PC-3 (cell line): ENCODE measurements at regions of chr3 and their contacts with region 1.

Region 1: DNA sequence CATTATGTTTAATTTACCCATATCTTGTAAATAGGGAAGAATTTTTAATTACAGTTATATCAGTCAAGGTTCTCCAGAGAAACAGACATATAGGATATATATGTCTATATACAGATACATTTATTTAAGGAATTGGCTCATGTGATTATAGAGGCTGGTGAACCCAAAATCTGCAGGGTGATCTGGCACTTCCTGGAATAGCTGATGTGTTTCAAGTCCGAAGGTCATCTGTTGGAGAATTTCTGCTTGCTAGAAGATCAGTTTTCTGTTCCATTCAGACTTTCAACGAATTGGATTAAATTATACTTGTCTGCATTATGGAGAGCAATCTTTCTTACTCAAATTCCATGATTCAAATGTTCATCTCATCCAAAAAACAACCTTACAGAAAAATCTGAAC is 694.6 kb upstream of the DPPA4 start:
- DNase-seq: no peak
- ATAC-seq: no peak
- H3K4me3 ChIP-seq: no peak overlapping the region
- H3K27ac ChIP-seq: no peak overlapping the region
- H3K4me1 ChIP-seq: 0 out of 2 replicates have a peak, but pooled peaks cover 3% of the 10 kb centered on the region
- H3K27me3 ChIP-seq: no peaks in the 10 kb centered on the region
- CTCF ChIP-seq: no peak

Region 2: GRCh38 chr3:109743981-109744380 is 288.0 kb before region 1 on chr3:
- CTCF ChIA-PET with region 1: no interaction called
- POLR2A ChIA-PET with region 1: interaction called, 10 read pairs
- intact Hi-C with region 1: no loop called
- DNase-seq: no peak
- ATAC-seq: no peak
- H3K4me3 ChIP-seq: no peak overlapping the region
- H3K27ac ChIP-seq: no peak overlapping the region
- H3K4me1 ChIP-seq: no peaks in the 10 kb centered on the region
- H3K27me3 ChIP-seq: no peaks in the 10 kb centered on the region
- CTCF ChIP-seq: no peak

Region 3: DNA sequence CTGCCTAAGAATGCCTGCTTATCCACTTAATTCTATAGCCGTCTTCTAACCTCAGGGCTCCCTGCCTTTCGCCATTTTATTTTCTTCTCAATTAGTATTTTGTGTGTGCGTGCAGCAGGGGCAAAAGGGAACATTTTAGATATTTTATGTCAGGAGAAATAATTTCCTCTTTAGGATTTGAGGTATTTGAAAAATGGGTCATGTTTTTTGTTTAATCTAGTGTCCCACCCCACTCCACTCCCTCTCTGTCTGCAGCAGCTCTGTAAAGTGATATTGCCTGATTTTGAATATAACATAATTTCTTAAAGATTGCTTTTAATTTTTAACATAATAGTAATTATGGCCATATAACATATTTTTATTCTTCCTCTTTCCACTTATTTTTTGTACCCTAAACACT is 101.4 kb before region 1 on chr3:
- CTCF ChIA-PET with region 1: no interaction called
- POLR2A ChIA-PET with region 1: no interaction called
- intact Hi-C with region 1: no loop called
- DNase-seq: peak; percentile 31
- ATAC-seq: peak; percentile 31
- H3K4me3 ChIP-seq: no peak overlapping the region
- H3K27ac ChIP-seq: peak overlapping the region; percentile 38
- H3K4me1 ChIP-seq: peaks cover 23% of the 10 kb centered on the region
- H3K27me3 ChIP-seq: no peaks in the 10 kb centered on the region
- CTCF ChIP-seq: no peak

Region 4: DNA sequence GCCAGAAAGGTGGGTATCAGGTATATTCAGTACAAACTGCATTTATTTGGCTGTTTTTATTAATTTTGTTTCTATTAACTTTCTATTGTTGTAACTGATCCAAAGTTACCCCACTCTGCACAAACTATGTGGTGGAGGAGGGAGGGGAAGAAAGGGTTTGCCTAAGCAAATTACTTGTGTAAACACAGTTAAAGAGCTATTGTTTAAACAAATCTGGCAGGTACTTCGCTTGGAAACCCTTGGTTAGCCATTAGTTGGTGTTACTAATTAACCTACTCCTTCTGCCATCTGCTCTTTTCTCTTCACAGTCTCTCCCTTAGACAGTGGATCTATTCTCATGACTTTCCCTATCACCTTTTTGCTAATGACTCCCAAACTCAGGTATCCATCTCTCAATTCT is 711.2 kb after region 1 on chr3:
- CTCF ChIA-PET with region 1: no interaction called
- POLR2A ChIA-PET with region 1: no interaction called
- intact Hi-C with region 1: no loop called
- DNase-seq: no peak
- ATAC-seq: peak; percentile 78
- H3K4me3 ChIP-seq: no peak overlapping the region
- H3K27ac ChIP-seq: no peak overlapping the region
- H3K4me1 ChIP-seq: peaks cover 4% of the 10 kb centered on the region; the same call in 1 of the 2 replicates
- H3K27me3 ChIP-seq: no peaks in the 10 kb centered on the region
- CTCF ChIP-seq: no peak

Region 5: GRCh38 chr3:111080413-111080812 is 1048.4 kb after region 1 on chr3:
- CTCF ChIA-PET with region 1: no interaction called
- POLR2A ChIA-PET with region 1: interaction called, 14 read pairs
- intact Hi-C with region 1: no loop called
- DNase-seq: peak; percentile 70
- ATAC-seq: peak; percentile 61
- H3K4me3 ChIP-seq: no peak overlapping the region
- H3K27ac ChIP-seq: no peak overlapping the region
- H3K4me1 ChIP-seq: peaks cover 9% of the 10 kb centered on the region
- H3K27me3 ChIP-seq: no peaks in the 10 kb centered on the region
- CTCF ChIP-seq: peak; percentile 75